ENCODE measurements at regions of chr1 and their contacts with region 1.

Region 1: GRCh38 chr1:11907275-11908094 is 18.7 kb downstream of the KIAA2013 start:
- DNase-seq: peak; percentile 87
- ATAC-seq: peak; percentile 49
- H3K4me3 Mint-ChIP-seq: peak overlapping the region; percentile 92
- H3K27ac Mint-ChIP-seq: peak overlapping the region; percentile 100
- H3K4me1 Mint-ChIP-seq: peaks cover 38% of the 10 kb centered on the region
- H3K27me3 Mint-ChIP-seq: peaks cover 19% of the 10 kb centered on the region

Region 2: DNA sequence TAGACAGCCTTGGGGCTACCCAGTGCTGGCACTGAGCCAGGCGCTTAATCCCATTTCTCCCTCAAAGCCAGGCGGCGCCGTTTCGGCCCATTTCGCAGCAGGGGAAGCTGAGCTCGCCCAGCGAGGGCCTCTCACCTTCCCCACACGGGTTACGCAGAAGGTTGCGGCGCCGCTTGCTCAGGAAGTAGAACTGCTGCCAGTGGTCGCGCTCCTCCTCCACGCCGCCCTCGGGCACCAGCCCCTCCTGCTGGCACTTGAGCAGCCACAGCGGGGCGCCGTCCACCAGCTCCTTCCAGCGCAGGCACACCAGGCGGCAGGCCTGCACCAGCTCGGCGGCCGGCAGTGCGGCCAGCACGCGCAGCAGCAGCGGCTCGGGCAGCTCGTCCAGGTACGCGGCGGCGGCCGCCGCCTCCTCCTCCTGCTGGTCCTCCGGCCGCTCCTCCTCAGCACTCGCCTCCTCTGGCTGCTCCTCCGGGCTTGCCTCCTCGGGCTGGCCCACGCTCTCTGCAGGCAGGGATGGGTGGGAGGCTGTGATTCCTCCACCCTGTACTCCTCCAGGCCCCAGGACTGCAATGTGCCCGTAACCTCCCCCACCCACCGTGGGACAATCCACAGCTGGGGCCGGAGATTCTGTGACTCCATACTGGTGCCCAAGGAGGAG is 257.0 kb before region 1 on chr1:
- POLR2A ChIA-PET with region 1: interaction called, 24 read pairs
- DNase-seq: peak; percentile 88
- ATAC-seq: peak; percentile 85
- H3K4me3 Mint-ChIP-seq: peak overlapping the region; percentile 61
- H3K27ac Mint-ChIP-seq: peak overlapping the region; percentile 65
- H3K4me1 Mint-ChIP-seq: peaks cover 18% of the 10 kb centered on the region
- H3K27me3 Mint-ChIP-seq: no peaks in the 10 kb centered on the region

Region 3: DNA sequence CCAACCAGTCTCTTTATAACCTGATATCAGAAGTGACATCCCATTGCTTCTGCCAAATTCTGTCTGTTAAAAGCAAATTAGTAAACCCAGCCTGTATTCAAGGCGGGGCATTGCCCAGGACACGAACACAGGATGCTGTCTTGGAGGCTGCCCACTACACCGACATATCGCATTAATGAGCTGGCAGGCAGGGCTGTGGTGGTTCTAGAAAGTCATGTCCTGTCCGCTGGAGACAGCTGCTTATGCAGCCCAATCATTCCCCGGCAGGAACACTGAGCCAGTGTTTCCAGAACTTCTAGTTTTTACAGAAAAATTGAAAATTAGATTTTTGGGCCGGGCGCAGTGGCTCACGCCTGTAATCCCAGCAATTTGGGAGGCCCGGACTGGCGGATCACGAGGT is 126.2 kb before region 1 on chr1:
- POLR2A ChIA-PET with region 1: no interaction called
- DNase-seq: no peak
- ATAC-seq: no peak
- H3K4me3 Mint-ChIP-seq: no peak overlapping the region
- H3K27ac Mint-ChIP-seq: no peak overlapping the region
- H3K4me1 Mint-ChIP-seq: no peaks in the 10 kb centered on the region
- H3K27me3 Mint-ChIP-seq: peaks cover 4% of the 10 kb centered on the region

Region 4: DNA sequence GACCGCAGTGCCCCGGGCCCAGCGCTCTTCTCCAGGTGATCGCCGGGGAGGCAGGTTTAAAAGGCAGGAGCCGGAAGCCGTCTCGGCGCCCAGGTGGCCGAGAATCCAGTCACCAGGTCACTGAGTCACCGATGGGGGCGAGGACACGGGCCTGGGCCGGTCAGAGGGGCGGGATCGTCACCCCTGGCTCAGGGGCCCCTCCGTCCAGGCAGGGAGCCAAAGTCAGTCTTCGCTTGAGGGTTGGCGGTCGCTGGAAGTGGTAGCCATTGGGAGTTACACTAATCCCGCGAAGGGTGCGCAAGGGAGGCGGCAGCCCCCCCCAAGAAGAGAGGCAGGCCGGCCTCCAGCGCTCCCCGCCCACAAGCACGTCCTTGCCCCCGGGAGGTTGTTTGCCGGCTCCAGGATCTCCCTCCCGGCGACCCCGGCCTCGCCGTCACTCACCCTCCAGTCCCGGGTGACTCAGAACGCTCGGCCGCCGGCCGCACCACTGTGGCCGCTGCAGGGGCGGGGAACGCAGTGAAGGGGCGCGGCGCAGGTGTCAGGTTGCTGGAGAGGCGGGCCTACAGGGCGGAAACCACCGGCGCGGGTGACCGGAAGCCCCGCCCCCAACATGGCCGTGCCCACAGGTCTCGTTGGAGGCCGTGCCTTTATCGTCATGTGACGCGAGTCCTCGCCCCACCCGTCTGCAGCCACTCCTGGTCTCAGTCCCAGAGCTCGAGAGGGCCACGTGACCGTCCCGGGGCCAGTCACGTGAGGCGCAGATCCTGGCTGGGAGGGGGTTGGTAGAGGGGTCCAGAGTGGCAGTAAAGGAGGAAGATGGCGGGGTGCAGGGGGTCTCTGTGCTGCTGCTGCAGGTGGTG is 101.8 kb before region 1 on chr1 and contains the starts of genes CLCN6 and MTHFR:
- POLR2A ChIA-PET with region 1: interaction called, 67 read pairs
- DNase-seq: peak; percentile 99
- ATAC-seq: peak; percentile 80
- H3K4me3 Mint-ChIP-seq: peak within 1 kb of the TSS; percentile 99
- H3K27ac Mint-ChIP-seq: peak within 1 kb of the TSS; percentile 98
- H3K4me1 Mint-ChIP-seq: peaks cover 51% of the 10 kb centered on the region
- H3K27me3 Mint-ChIP-seq: no peaks in the 10 kb centered on the region
- total RNA-seq, gene CLCN6: 21.9 to 25.5 TPM
- total RNA-seq, gene MTHFR: 47.0 to 47.1 TPM

Region 5: GRCh38 chr1:11918779-11919519 is 11.5 kb after region 1 on chr1:
- POLR2A ChIA-PET with region 1: interaction called, 83 read pairs
- DNase-seq: no peak
- ATAC-seq: no peak
- H3K4me3 Mint-ChIP-seq: no peak overlapping the region
- H3K27ac Mint-ChIP-seq: no peak overlapping the region
- H3K4me1 Mint-ChIP-seq: peaks cover 11% of the 10 kb centered on the region
- H3K27me3 Mint-ChIP-seq: no peaks in the 10 kb centered on the region

Region 6: DNA sequence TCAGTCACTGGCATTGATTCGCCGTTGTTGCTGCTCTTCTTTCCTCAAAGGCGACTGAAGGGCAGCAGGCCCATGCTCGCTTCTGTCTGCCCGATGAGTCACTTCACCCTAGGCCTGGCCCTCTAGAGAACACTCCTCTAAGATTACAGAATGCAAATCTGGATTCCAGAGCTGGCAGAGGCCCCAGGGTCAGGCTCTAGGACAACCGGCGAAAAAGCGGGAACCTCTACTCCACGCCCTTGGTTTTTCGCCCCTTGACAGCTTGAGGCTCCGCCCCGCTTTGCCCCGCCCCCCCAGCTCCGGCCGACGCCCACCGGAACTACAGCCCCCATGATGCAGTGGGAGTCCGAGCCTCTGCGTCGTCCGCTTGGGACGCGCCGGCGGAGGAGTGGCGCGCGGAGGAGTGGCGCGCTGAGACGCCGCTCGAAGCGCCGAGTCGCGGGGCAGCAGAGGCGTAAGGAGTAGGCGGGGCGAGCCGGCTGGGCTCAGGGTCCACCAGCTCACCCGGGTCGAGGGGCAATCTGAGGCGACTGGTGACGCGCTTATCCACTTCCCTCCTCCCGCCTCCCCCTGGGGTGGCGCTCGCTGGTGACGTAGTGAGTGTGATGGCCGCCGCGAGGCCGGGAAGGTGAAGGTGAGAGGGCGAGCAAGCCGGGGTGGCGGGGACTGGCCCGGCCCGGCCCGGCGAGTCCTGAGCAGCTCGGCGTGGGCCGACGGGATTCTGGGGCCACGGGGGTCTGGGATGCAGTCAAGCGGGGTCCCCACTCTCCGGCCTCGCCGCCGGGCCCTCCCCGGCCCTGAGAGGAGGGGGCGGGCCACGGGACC is 72.6 kb after region 1 on chr1 and contains the start of gene MFN2:
- POLR2A ChIA-PET with region 1: interaction called, 207 read pairs
- DNase-seq: peak; percentile 94
- ATAC-seq: peak; percentile 96
- H3K4me3 Mint-ChIP-seq: peak within 1 kb of the TSS; percentile 96
- H3K27ac Mint-ChIP-seq: peak within 1 kb of the TSS; percentile 94
- H3K4me1 Mint-ChIP-seq: peaks cover 28% of the 10 kb centered on the region
- H3K27me3 Mint-ChIP-seq: no peaks in the 10 kb centered on the region
- total RNA-seq, gene MFN2: 51.4 TPM

Region 7: DNA sequence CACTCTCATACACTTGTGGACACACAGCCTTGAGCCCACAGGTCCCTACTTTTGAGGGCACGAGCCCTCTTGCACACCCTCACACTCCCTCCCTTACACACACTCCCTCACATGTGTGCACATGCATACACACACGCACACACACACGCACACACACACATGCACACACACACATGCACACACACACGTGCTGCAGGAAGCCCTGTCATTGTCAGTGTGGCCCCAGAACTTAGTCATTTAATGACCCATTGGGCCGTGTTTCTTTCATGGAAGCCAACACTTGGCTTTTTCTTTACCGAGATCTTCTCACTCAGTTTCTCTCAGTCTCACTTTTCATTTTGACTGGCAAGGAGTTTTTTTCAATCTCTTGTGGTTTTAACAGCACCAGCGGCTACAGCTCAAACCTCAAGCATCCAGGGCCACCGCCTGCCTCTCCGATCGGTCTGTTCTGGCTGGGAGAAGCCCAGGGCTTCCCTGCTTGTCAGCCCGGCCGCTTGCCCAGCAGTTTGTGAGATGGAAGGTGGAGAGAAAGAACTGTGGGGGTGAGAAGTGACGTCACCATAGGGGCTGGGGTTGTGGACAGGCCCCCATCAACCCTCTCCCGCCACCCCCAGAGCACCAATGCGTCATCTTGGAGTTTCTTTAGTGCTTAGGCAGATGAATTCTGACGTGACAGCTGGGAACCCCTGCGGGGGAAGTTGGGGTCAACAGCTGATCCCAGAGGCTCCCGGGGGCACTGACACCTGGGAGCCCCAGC is 139.8 kb after region 1 on chr1:
- POLR2A ChIA-PET with region 1: interaction called, 15 read pairs
- DNase-seq: peak; percentile 67
- ATAC-seq: peak; percentile 85
- H3K4me3 Mint-ChIP-seq: no peak overlapping the region
- H3K27ac Mint-ChIP-seq: no peak overlapping the region
- H3K4me1 Mint-ChIP-seq: peaks cover 11% of the 10 kb centered on the region
- H3K27me3 Mint-ChIP-seq: peaks cover 15% of the 10 kb centered on the region

Region 8: GRCh38 chr1:12477936-12478611 is 570.6 kb after region 1 on chr1:
- POLR2A ChIA-PET with region 1: no interaction called
- DNase-seq: peak; percentile 55
- ATAC-seq: peak; percentile 37
- H3K4me3 Mint-ChIP-seq: peak overlapping the region; percentile 79
- H3K27ac Mint-ChIP-seq: peak overlapping the region; percentile 91
- H3K4me1 Mint-ChIP-seq: peaks cover 86% of the 10 kb centered on the region
- H3K27me3 Mint-ChIP-seq: no peaks in the 10 kb centered on the region

Measured in activated naive CD8-positive, alpha-beta T cell treated with anti-CD3 and anti-CD28 coated beads, Interleukin-2, amount 10 ng/mL, durations not matched to agents 7 days and 5 days (primary cell).